T-cell (primary cell): ENCODE measurements at regions of chr1 and their contacts with region 1.

Region 1: DNA sequence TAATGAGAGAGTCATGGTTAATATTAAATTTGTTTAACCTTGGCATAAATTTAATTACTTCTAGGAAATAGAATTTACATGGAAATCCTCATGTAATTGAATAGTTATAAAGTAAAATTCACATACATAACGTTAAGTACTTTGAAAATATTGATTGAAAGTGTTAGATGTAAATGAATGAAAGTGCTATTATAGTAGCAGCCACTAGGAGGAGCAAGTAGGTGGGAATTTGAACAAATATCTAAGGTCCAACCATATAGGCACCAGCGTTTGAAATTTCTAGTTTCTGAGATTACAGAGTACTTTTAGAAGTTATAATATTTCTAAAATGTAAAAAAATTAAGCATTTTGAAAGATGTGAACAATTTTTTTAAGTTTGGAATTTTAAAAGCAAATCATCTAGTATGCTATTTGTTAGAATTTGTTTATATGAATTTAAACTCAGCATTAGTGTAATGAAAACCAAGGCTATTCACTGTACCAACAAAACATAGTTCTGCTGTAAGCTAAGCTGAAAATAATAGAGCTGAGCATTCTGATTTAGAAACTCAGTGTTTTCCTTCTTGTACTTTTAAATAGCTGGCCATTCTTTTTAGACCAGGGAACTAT is 3.3 kb downstream of the B3GALT2 start:
- DNase-seq: peak in 3 of 35 experiments; percentile 18 to 76 (median 20)
- ATAC-seq: peak; percentile 45 to 72 (median 60)
- H3K4me3 ChIP-seq: peak overlapping the region in 1 of 2 donors; percentile 19
- H3K4me3 Mint-ChIP-seq: peak overlapping the region in 2 of 3 donors; percentile 76 to 84
- H3K27ac ChIP-seq: no peak overlapping the region
- H3K27ac Mint-ChIP-seq: peak overlapping the region; percentile 77 to 91
- H3K4me1 ChIP-seq: peaks cover 5 to 11% of the 10 kb centered on the region in 2 experiments
- H3K4me1 Mint-ChIP-seq: peaks cover 46 to 64% (median 58%) of the 10 kb centered on the region in 3 donors
- H3K27me3 ChIP-seq: no peaks in the 10 kb centered on the region
- H3K27me3 Mint-ChIP-seq: no peaks in the 10 kb centered on the region

Region 2: GRCh38 chr1:194295685-194296084 is 1112.6 kb after region 1 on chr1:
- CTCF ChIA-PET with region 1: interaction called, 15 read pairs
- POLR2A ChIA-PET with region 1: no interaction called
- DNase-seq: peak in 23 of 35 experiments; percentile 1 to 82 (median 22)
- ATAC-seq: peak; percentile 89 to 98 (median 94)
- H3K4me3 ChIP-seq: no peak overlapping the region
- H3K4me3 Mint-ChIP-seq: no peak overlapping the region
- H3K27ac ChIP-seq: no peak overlapping the region
- H3K27ac Mint-ChIP-seq: peak overlapping the region; percentile 40 to 68
- H3K4me1 ChIP-seq: peaks cover 0 to 7% of the 10 kb centered on the region in 2 experiments
- H3K4me1 Mint-ChIP-seq: peaks cover 16 to 22% (median 17%) of the 10 kb centered on the region in 3 donors
- H3K27me3 ChIP-seq: no peaks in the 10 kb centered on the region
- H3K27me3 Mint-ChIP-seq: no peaks in the 10 kb centered on the region